ENCODE measurements at regions of chr14 and their contacts with region 1.

Region 1: GRCh38 chr14:69242311-69243224 is 17.4 kb upstream of the GALNT16 start:
- DNase-seq: peak; percentile 71
- H3K4me3 Mint-ChIP-seq: no peak overlapping the region
- H3K27ac Mint-ChIP-seq: no peak overlapping the region
- H3K4me1 Mint-ChIP-seq: no peaks in the 10 kb centered on the region
- H3K27me3 Mint-ChIP-seq: no peaks in the 10 kb centered on the region

Region 2: DNA sequence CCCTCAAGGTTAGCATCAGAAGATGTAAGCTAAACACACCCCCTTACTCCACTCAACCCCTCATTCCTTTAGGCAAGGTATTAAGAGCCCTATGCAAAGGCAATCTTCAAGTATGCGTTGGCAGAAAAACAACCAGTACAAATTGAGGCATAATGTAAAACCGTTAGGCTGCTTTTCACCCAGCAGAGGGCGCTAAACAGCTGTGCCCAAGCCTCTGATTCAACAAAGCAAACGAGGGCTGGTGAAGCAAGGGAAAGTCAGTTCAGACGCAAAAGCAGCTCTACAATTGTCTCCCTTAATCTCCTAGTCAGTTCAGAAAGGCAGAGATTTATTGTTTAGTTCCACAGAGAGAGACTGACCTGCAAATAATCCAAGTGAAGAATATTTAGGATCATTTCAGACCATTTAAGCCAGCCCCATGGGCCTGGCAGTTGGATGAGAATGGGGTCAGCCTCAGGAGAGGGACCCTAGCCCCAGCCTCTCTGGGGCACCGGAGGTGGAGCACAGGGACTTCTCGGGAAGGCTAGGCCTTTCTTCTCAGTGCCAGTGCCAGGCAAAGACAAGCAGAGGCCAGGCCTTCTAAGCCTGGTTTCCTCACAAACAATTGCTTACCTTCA is 113.2 kb before region 1 on chr14:
- CTCF ChIA-PET with region 1: interaction called, 17 read pairs
- DNase-seq: peak; percentile 78
- H3K4me3 Mint-ChIP-seq: no peak overlapping the region
- H3K27ac Mint-ChIP-seq: no peak overlapping the region
- H3K4me1 Mint-ChIP-seq: peaks cover 18% of the 10 kb centered on the region
- H3K27me3 Mint-ChIP-seq: no peaks in the 10 kb centered on the region

Region 3: GRCh38 chr14:69460093-69460701 is 217.6 kb after region 1 on chr14:
- CTCF ChIA-PET with region 1: interaction called, 22 read pairs
- DNase-seq: peak; percentile 75
- H3K4me3 Mint-ChIP-seq: no peak overlapping the region
- H3K27ac Mint-ChIP-seq: no peak overlapping the region
- H3K4me1 Mint-ChIP-seq: no peaks in the 10 kb centered on the region
- H3K27me3 Mint-ChIP-seq: no peaks in the 10 kb centered on the region

Region 4: GRCh38 chr14:69475194-69475818 is 232.7 kb after region 1 on chr14:
- CTCF ChIA-PET with region 1: interaction called, 11 read pairs
- DNase-seq: no peak
- H3K4me3 Mint-ChIP-seq: no peak overlapping the region
- H3K27ac Mint-ChIP-seq: no peak overlapping the region
- H3K4me1 Mint-ChIP-seq: no peaks in the 10 kb centered on the region
- H3K27me3 Mint-ChIP-seq: peaks cover 22% of the 10 kb centered on the region

Region 5: GRCh38 chr14:69574263-69574953 is 331.8 kb after region 1 on chr14 and contains the start of gene CCDC177:
- CTCF ChIA-PET with region 1: interaction called, 19 read pairs
- DNase-seq: peak; percentile 82
- H3K4me3 Mint-ChIP-seq: peak within 1 kb of the TSS; percentile 55
- H3K27ac Mint-ChIP-seq: peak within 1 kb of the TSS; percentile 38
- H3K4me1 Mint-ChIP-seq: peaks cover 15% of the 10 kb centered on the region
- H3K27me3 Mint-ChIP-seq: peaks cover 96% of the 10 kb centered on the region

Measured in activated naive CD4-positive, alpha-beta T cell treated with anti-CD3 and anti-CD28 coated beads, Interleukin-2, amount 10 ng/mL, durations not matched to agents 7 days and 5 days (primary cell).